Activated naive CD4-positive, alpha-beta T cell treated with anti-CD3 and anti-CD28 coated beads for 36 hours (primary cell): ENCODE measurements at regions of chr10 and their contacts with region 1.

Region 1: DNA sequence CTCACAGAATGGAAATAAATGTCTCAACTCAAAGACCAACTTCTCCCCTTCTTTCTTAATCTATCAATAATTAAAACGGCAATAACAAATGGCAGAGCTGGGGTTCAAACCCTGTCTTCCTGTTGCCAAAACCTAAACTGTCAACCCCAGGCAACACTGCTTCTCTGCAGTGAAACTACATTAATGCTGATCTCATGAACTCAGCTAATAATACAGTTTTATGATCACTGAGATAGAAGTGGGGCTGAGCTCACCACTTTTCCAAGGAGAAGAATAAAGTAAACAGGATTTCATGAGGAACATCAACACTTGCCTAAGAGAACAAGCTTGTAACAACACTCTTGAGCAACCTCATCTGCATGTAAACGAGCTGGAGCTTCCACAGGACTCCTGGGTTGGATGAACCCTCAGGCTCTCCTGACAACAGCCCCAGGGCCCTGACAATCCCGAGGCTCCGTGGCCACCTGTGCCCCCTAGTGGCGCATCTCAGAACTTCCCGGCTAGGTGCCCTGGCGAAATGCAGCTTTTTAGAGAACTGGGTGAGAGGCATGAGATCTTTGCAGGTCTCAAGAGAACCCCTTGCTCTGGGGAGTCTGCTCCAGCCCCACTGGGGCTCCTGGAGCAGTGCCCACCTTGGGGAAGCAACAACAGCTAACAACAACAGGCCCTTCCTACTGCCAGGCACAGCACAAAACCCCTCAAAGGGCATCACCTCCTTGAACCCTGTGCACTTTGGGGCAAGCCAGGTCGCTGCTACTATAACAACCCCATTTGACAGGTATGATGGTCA is 169.3 kb downstream of the SH3PXD2A start:
- DNase-seq: peak; percentile 87
- H3K4me3 Mint-ChIP-seq: no peak overlapping the region
- H3K27ac Mint-ChIP-seq: no peak overlapping the region
- H3K4me1 Mint-ChIP-seq: no peaks in the 10 kb centered on the region
- H3K27me3 Mint-ChIP-seq: no peaks in the 10 kb centered on the region

Region 2: DNA sequence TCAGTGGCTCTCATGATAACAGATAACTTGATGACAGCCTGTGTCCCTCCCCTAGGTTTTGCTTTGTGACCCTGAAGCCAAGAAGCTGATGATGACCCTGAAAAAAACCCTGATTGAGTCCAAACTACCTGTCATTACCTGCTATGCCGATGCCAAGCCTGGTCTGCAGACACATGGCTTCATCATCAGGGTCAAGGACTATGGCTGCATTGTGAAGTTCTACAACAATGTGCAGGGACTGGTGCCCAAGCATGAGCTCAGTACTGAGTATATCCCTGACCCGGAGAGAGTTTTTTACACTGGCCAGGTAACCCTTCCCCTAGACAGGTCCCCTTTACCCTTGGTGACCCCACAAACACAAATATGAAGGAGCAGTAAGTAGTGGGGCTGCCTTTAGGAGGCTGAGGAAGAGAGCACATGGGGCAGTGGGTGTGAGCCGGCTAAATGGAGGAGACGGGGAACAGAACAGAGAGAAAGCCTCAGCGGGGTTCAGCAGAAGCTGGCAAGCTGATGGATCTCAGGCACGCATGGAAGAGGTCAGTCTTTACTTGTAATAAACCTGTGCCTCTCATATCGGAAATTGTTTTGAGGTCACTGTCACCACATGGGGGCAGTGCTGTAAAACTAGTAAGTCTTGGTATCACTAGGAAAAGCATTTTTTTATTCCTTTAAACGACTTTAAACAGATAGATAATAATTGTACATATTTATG is 269.5 kb before region 1 on chr10:
- CTCF ChIA-PET with region 1: no interaction called
- intact Hi-C with region 1: loop called (anchors 1 kb)
- DNase-seq: peak; percentile 75
- H3K4me3 Mint-ChIP-seq: no peak overlapping the region
- H3K27ac Mint-ChIP-seq: no peak overlapping the region
- H3K4me1 Mint-ChIP-seq: no peaks in the 10 kb centered on the region
- H3K27me3 Mint-ChIP-seq: no peaks in the 10 kb centered on the region

Region 3: GRCh38 chr10:103598654-103599115 is 87.4 kb before region 1 on chr10:
- CTCF ChIA-PET with region 1: interaction called, 74 read pairs
- intact Hi-C with region 1: loop called (anchors 1 kb)
- DNase-seq: peak; percentile 60
- H3K4me3 Mint-ChIP-seq: no peak overlapping the region
- H3K27ac Mint-ChIP-seq: no peak overlapping the region
- H3K4me1 Mint-ChIP-seq: no peaks in the 10 kb centered on the region
- H3K27me3 Mint-ChIP-seq: no peaks in the 10 kb centered on the region

Region 4: GRCh38 chr10:103612462-103613365 is 73.4 kb before region 1 on chr10:
- CTCF ChIA-PET with region 1: interaction called, 20 read pairs
- intact Hi-C with region 1: no loop called
- DNase-seq: no peak
- H3K4me3 Mint-ChIP-seq: no peak overlapping the region
- H3K27ac Mint-ChIP-seq: no peak overlapping the region
- H3K4me1 Mint-ChIP-seq: no peaks in the 10 kb centered on the region
- H3K27me3 Mint-ChIP-seq: no peaks in the 10 kb centered on the region

Region 5: DNA sequence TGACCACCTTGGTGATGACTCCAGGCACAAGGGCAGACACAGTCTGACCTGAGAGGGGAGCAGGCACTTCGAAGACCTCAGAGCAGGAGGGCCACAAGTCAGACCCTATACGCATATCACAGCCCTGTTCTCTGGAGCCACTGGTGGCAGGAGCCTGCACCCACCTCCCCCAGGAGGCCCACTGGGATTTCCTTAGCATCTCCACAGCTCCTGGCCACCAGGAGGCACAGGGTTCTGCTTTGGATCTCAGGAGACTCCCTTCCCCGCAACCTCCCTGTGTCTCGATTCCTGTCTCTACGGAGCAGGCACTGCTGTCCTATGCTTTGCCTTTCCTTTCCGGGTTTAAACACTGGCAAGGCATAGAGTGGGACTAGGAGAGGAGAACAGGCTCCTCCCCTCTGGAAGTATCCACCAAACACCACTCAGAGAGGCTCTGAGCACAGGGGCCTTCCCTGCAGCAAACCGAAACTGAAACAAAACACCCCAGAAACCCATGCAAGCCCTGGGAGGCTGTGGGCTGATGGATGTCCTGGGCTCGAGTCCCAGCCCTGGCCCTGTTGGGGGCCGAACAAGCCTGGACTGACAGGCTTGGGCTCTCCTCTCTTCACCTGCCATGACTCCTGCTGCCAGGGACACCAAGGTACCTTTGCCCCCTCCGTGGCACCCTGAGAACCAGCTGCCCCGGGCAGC is 26.3 kb before region 1 on chr10:
- CTCF ChIA-PET with region 1: interaction called, 45 read pairs
- intact Hi-C with region 1: no loop called
- DNase-seq: peak; percentile 78
- H3K4me3 Mint-ChIP-seq: peak overlapping the region; percentile 84
- H3K27ac Mint-ChIP-seq: peak overlapping the region; percentile 71
- H3K4me1 Mint-ChIP-seq: peaks cover 7% of the 10 kb centered on the region
- H3K27me3 Mint-ChIP-seq: no peaks in the 10 kb centered on the region

Region 6: GRCh38 chr10:103696411-103697145 is 10.5 kb after region 1 on chr10:
- CTCF ChIA-PET with region 1: interaction called, 31 read pairs
- intact Hi-C with region 1: no loop called
- DNase-seq: peak; percentile 92
- H3K4me3 Mint-ChIP-seq: peak overlapping the region; percentile 28
- H3K27ac Mint-ChIP-seq: no peak overlapping the region
- H3K4me1 Mint-ChIP-seq: peaks cover 22% of the 10 kb centered on the region
- H3K27me3 Mint-ChIP-seq: no peaks in the 10 kb centered on the region